Dorsolateral prefrontal cortex (tissue), 120 donors: ENCODE measurements at regions of chr18 and their contacts with region 1.

Region 1: DNA sequence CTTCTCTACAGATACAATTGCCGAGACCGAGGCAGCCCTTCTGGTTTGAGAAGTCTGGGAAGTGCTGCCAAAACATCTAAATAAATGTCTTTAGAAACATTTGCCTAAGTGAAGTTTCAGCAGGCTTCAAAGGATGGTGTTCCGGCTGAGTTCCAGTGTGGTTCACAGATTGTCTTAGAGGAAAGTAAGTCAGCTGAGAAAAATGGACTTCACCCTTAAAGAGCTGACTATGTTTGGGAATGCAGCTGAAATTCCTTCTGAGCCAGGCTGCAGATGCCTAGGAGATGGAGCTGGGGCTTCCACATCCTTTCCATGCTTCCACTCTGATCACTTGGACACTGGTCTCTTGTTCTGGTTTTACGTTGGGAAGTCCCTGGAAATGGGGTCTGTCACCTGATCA is 83.6 kb downstream of the FHOD3 start:
- DNase-seq: no peak
- H3K4me3 ChIP-seq: no peak overlapping the region
- H3K27ac ChIP-seq: peak overlapping the region in 1 of 59 donors; percentile 10
- H3K27me3 ChIP-seq: no peaks in the 10 kb centered on the region
- CTCF ChIP-seq: no peak

Region 2: GRCh38 chr18:36401471-36401870 is 20.4 kb after region 1 on chr18:
- intact Hi-C with region 1: loop called in 1 of 2 experiments (anchors 1 kb)
- DNase-seq: no peak
- H3K4me3 ChIP-seq: no peak overlapping the region
- H3K27ac ChIP-seq: no peak overlapping the region
- H3K27me3 ChIP-seq: no peaks in the 10 kb centered on the region
- CTCF ChIP-seq: no peak